HCT116 (cell line): ENCODE measurements at regions of chr4 and their contacts with region 1.

Region 1: DNA sequence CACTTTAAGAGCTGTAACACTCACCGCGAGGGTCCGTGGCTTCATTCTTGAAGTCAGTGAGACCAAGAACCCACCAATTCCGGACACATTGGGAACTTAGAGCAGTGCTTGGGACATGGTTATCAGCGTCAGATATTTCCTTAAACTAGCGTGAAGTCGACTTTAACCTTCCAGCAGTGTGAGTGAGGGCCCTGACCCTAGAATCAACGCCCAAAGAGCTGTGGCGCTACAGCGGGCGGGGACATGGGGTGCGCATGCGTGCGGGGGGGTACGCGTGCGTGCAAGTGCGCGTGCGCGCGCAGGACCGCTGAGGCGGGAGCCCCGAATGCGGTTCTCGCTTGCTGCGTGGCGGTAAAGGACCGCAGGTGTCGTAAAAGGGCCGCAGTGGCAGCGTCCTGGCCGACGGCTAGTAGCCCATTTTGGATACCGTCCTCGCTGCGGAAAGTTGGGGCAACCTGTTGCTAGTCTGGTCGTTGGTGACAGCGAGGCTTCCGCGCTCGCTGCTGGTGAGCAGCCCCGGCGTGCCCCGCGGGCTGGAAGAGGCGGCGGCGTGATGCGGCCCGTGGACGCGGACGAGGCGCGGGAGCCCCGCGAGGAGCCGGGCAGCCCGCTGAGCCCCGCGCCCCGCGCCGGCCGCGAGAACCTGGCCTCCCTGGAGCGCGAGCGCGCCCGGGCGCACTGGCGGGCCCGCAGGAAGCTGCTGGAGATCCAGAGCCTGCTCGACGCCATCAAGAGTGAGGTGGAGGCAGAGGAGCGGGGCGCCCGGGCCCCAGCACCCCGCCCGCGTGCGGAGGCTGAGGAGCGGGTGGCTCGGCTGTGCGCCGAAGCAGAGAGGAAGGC is 19.8 kb upstream of the S100P start:
- DNase-seq: peak; percentile 94
- ATAC-seq: peak; percentile 77
- H3K4me3 ChIP-seq: peak overlapping the region; percentile 71 to 86
- H3K27ac ChIP-seq: peak overlapping the region; percentile 99
- H3K4me1 ChIP-seq: peaks cover 8 to 16% of the 10 kb centered on the region in 2 experiments; a peak in 3 of 4 replicates
- H3K27me3 ChIP-seq: no peaks in the 10 kb centered on the region
- CTCF ChIP-seq: no peak
- POLR2A ChIP-seq: no peak
- RAD21 ChIP-seq: no peak

Region 2: GRCh38 chr4:6269616-6270511 is 404.0 kb before region 1 on chr4 and contains the start of gene WFS1:
- CTCF ChIA-PET with region 1: no interaction called
- POLR2A ChIA-PET with region 1: no interaction called
- RAD21 ChIA-PET with region 1: no interaction called
- intact Hi-C with region 1: no loop called
- DNase-seq: peak; percentile 94
- ATAC-seq: peak; percentile 98
- H3K4me3 ChIP-seq: peak within 1 kb of the TSS; percentile 72 to 87
- H3K27ac ChIP-seq: peak within 1 kb of the TSS; percentile 47; the same call in 1 of the 2 replicates
- H3K4me1 ChIP-seq: peaks cover 39 to 43% of the 10 kb centered on the region in 2 experiments
- H3K27me3 ChIP-seq: no peaks in the 10 kb centered on the region
- CTCF ChIP-seq: no peak
- POLR2A ChIP-seq: peak; percentile 40
- RAD21 ChIP-seq: no peak
- total RNA-seq, gene WFS1: 21.5 TPM

Region 3: GRCh38 chr4:6640292-6641163 is 33.4 kb before region 1 on chr4 and contains the start of gene MRFAP1:
- CTCF ChIA-PET with region 1: no interaction called
- POLR2A ChIA-PET with region 1: interaction called, 18 read pairs
- RAD21 ChIA-PET with region 1: no interaction called
- intact Hi-C with region 1: no loop called
- DNase-seq: peak; percentile 86
- ATAC-seq: peak; percentile 92
- H3K4me3 ChIP-seq: peak within 1 kb of the TSS; percentile 97 to 99
- H3K27ac ChIP-seq: peak within 1 kb of the TSS; percentile 88
- H3K4me1 ChIP-seq: peaks cover 10 to 13% of the 10 kb centered on the region in 2 experiments
- H3K27me3 ChIP-seq: no peaks in the 10 kb centered on the region
- CTCF ChIP-seq: no peak
- POLR2A ChIP-seq: peak; percentile 92
- RAD21 ChIP-seq: no peak
- total RNA-seq, gene MRFAP1: 313 TPM

Region 4: GRCh38 chr4:6663596-6664393 is 10.1 kb before region 1 on chr4:
- CTCF ChIA-PET with region 1: interaction called, 13 read pairs
- POLR2A ChIA-PET with region 1: interaction called, 55 read pairs
- RAD21 ChIA-PET with region 1: interaction called in 1 of 2 experiments, 3 read pairs
- intact Hi-C with region 1: no loop called
- DNase-seq: no peak
- ATAC-seq: no peak
- H3K4me3 ChIP-seq: no peak overlapping the region
- H3K27ac ChIP-seq: no peak overlapping the region
- H3K4me1 ChIP-seq: peaks cover 2 to 14% of the 10 kb centered on the region in 2 experiments; a peak in 3 of 4 replicates
- H3K27me3 ChIP-seq: no peaks in the 10 kb centered on the region
- CTCF ChIP-seq: no peak
- POLR2A ChIP-seq: no peak
- RAD21 ChIP-seq: no peak

Region 5: GRCh38 chr4:6688879-6689505 is 15.1 kb after region 1 on chr4:
- CTCF ChIA-PET with region 1: interaction called, 5 read pairs
- POLR2A ChIA-PET with region 1: interaction called, 35 read pairs
- RAD21 ChIA-PET with region 1: no interaction called
- intact Hi-C with region 1: no loop called
- DNase-seq: peak; percentile 75
- ATAC-seq: peak; percentile 73
- H3K4me3 ChIP-seq: peak overlapping the region; percentile 34 to 39
- H3K27ac ChIP-seq: peak overlapping the region; percentile 94
- H3K4me1 ChIP-seq: peaks cover 39 to 57% of the 10 kb centered on the region in 2 experiments
- H3K27me3 ChIP-seq: no peaks in the 10 kb centered on the region
- CTCF ChIP-seq: no peak
- POLR2A ChIP-seq: no peak
- RAD21 ChIP-seq: no peak

Region 6: DNA sequence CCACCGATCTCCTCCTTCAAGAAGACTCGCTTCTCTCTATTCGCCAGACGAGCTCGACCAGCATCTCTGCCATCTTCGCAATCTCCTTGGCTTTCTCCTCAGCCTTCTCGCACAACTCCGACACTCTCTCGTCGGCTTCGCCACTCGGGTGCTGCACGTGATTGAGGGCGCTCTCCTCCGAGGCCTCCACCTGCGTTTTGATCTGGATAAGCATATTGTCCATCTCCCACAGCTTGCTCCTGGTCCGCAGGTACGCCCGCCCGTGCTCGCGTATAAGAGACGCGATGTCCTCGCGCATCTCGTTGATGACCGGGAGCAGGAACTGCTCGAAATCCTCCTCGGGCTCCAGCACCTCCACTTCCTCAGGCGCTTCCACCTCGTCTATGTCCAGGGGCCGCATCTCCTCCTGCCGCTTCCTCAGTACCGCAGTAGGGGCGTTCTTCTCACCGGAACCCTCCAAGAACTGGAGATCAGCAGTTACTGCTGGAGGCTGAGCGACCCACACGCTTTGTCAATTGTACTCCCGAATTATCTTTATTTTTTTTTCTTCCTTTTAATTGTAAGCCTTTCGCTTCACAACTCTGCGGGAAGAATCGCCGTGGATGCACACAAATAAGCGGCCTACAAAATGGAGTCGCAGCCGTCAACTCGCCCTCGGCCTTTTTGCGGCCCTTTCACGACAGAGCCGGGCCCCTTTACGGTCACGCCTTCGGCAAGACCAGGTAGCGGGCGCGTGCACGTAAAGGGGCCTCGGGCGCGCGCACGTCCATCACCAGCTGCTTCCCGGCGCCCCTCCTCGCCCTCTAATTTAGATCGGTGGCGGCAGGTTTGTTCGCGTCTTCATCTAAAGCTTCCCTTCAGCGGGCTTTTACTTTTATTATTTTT is 35.6 kb after region 1 on chr4 and contains the start of gene MRFAP1L1:
- CTCF ChIA-PET with region 1: interaction called, 3 read pairs
- POLR2A ChIA-PET with region 1: interaction called, 7 read pairs
- RAD21 ChIA-PET with region 1: no interaction called
- intact Hi-C with region 1: loop called (anchors 2 kb)
- DNase-seq: peak; percentile 95
- ATAC-seq: peak; percentile 80
- H3K4me3 ChIP-seq: peak within 1 kb of the TSS; percentile 88 to 89
- H3K27ac ChIP-seq: peak within 1 kb of the TSS; percentile 78
- H3K4me1 ChIP-seq: peaks cover 11 to 25% of the 10 kb centered on the region in 2 experiments
- H3K27me3 ChIP-seq: no peaks in the 10 kb centered on the region
- CTCF ChIP-seq: no peak
- POLR2A ChIP-seq: peak; percentile 81
- RAD21 ChIP-seq: no peak
- total RNA-seq, gene MRFAP1L1: 43.0 TPM